Prostate gland (tissue), 2 donors: ENCODE measurements at regions of chr11 and their contacts with region 1.

Region 1: GRCh38 chr11:76152086-76152681 is 54.1 kb downstream of the WNT11 start:
- DNase-seq: peak; percentile 79
- H3K4me3 ChIP-seq: peak overlapping the region in 1 of 2 donors; percentile 12
- H3K27ac ChIP-seq: no peak overlapping the region
- H3K4me1 ChIP-seq: peaks cover 2% of the 10 kb centered on the region
- H3K27me3 ChIP-seq: no peaks in the 10 kb centered on the region
- CTCF ChIP-seq: peak; percentile 78 to 95 (median 90)
- POLR2A ChIP-seq: no peak

Region 2: GRCh38 chr11:75706260-75706729 is 445.9 kb before region 1 on chr11:
- intact Hi-C with region 1: loop called (anchors 5 kb)
- DNase-seq: peak; percentile 61
- H3K4me3 ChIP-seq: no peak overlapping the region
- H3K27ac ChIP-seq: no peak overlapping the region
- H3K4me1 ChIP-seq: no peaks in the 10 kb centered on the region
- H3K27me3 ChIP-seq: no peaks in the 10 kb centered on the region
- CTCF ChIP-seq: peak; percentile 87 to 95 (median 90)
- POLR2A ChIP-seq: no peak

Region 3: DNA sequence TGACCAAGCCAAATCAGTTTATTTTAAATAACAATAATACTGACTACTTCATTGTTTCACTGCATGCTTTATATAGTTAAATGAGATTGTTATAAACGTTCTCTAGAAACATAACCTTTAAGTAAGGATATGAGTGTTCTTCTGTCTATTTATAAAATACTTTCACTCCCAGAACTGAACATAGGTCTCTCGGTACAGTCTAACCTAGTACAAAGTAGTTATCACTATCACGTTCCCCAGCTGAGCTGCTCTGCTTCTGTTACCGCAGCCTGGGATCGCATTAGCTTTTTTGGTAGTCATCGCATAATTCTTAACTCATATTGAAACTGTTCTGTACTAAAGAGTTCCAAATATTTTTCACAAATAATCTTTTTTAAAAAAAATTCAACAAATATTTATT is 89.5 kb before region 1 on chr11:
- intact Hi-C with region 1: no loop called
- DNase-seq: no peak
- H3K4me3 ChIP-seq: no peak overlapping the region
- H3K27ac ChIP-seq: no peak overlapping the region
- H3K4me1 ChIP-seq: no peaks in the 10 kb centered on the region
- H3K27me3 ChIP-seq: no peaks in the 10 kb centered on the region
- CTCF ChIP-seq: no peak
- POLR2A ChIP-seq: no peak

Region 4: DNA sequence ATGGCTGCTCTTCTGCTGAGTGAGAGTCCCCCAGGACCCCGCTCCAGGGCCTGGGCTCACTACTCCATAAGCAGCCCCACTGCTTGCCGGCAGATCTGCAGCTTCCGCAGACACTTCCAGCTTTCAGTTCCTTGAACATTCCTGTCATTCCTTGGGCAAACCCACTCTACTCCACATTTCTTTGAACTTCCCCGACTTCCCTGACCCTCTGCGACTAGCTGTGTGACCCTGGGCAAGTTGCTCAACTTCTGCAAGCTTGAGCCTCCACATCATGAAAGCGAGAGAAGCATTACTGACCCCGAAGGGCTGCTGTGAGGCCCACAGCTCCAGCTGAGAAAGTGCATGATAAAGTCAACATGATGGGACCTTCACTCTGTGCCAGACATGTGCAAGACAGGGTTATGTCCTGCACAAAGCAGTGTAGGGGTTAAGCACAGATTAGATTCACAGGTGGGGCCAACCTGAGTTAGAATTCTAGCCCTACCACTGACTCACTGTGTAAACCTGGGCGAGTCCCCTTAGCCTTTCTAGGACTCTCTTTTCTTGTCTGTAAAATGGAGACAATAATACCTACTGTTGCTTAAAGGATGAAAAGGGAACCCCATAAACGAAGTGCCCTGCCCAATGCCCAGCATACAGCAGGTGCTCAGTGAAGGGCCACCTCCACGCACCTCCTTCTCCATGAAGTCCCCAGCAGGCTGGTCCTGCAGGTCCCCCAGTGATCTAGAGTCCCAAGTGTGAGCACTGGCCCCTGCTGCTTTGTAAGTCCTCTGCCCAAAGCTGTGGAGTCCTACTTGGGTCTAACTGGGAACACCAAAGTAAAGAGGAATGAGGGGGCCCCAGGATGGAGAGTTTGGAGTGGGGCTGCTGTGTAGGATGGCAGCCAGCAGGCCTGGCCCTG is 177.2 kb after region 1 on chr11:
- intact Hi-C with region 1: no loop called
- DNase-seq: no peak
- H3K4me3 ChIP-seq: no peak overlapping the region
- H3K27ac ChIP-seq: no peak overlapping the region
- H3K4me1 ChIP-seq: no peaks in the 10 kb centered on the region
- H3K27me3 ChIP-seq: no peaks in the 10 kb centered on the region
- CTCF ChIP-seq: no peak
- POLR2A ChIP-seq: no peak

Region 5: GRCh38 chr11:76408171-76408965 is 256.2 kb after region 1 on chr11:
- intact Hi-C with region 1: no loop called
- DNase-seq: no peak
- H3K4me3 ChIP-seq: no peak overlapping the region
- H3K27ac ChIP-seq: no peak overlapping the region
- H3K4me1 ChIP-seq: peaks cover 2% of the 10 kb centered on the region
- H3K27me3 ChIP-seq: no peaks in the 10 kb centered on the region
- CTCF ChIP-seq: no peak
- POLR2A ChIP-seq: no peak